Activated CD4-positive, alpha-beta T cell treated with anti-CD3 and anti-CD28 coated beads for 36 hours (primary cell): ENCODE measurements at regions of chr9 and their contacts with region 1.

Region 1: DNA sequence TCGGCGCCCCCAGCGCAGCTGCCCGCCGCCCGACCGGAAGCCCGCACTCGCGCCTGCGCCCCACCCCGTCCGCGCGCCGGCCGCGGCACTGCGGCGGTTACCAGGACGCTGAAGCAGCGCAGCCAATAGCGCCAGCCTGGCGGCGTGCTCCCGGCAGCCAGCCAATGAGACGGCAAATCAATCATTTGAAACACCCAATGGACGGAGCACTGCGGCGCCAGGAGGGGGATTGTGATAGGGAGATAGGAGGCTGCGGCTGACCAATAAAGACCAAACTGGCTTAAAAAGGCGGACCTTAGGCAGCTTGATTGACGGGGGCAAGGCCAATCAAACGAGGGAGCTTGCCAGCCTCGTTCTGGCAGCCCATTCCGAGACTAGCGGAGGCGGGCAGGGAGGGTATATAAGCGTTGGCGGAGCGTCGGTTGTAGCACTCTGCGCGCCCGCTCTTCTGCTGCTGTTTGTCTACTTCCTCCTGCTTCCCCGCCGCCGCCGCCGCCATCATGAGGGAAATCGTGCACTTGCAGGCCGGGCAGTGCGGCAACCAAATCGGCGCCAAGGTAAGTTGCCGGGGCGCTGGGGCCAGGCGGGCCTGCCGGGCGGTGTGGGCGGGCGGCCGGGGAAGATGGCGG is at the start of gene TUBB4B:
- DNase-seq: peak; percentile 98
- ATAC-seq: peak; percentile 84
- H3K4me3 Mint-ChIP-seq: peak within 1 kb of the TSS; percentile 83
- H3K27ac Mint-ChIP-seq: peak within 1 kb of the TSS; percentile 87
- H3K4me1 Mint-ChIP-seq: peaks cover 27% of the 10 kb centered on the region
- H3K27me3 Mint-ChIP-seq: no peaks in the 10 kb centered on the region
- total RNA-seq, gene TUBB4B: 264 to 278 TPM

Region 2: GRCh38 chr9:136991993-136992818 is 248.8 kb before region 1 on chr9 and contains the start of gene PAXX:
- CTCF ChIA-PET with region 1: no interaction called
- POLR2A ChIA-PET with region 1: no interaction called
- intact Hi-C with region 1: loop called in 1 of 2 experiments (anchors 1 kb)
- DNase-seq: peak; percentile 98
- ATAC-seq: peak; percentile 95
- H3K4me3 Mint-ChIP-seq: peak within 1 kb of the TSS; percentile 81
- H3K27ac Mint-ChIP-seq: peak within 1 kb of the TSS; percentile 70
- H3K4me1 Mint-ChIP-seq: peaks cover 22% of the 10 kb centered on the region
- H3K27me3 Mint-ChIP-seq: peaks cover 4% of the 10 kb centered on the region
- total RNA-seq, gene PAXX: 52.7 to 67.1 TPM

Region 3: DNA sequence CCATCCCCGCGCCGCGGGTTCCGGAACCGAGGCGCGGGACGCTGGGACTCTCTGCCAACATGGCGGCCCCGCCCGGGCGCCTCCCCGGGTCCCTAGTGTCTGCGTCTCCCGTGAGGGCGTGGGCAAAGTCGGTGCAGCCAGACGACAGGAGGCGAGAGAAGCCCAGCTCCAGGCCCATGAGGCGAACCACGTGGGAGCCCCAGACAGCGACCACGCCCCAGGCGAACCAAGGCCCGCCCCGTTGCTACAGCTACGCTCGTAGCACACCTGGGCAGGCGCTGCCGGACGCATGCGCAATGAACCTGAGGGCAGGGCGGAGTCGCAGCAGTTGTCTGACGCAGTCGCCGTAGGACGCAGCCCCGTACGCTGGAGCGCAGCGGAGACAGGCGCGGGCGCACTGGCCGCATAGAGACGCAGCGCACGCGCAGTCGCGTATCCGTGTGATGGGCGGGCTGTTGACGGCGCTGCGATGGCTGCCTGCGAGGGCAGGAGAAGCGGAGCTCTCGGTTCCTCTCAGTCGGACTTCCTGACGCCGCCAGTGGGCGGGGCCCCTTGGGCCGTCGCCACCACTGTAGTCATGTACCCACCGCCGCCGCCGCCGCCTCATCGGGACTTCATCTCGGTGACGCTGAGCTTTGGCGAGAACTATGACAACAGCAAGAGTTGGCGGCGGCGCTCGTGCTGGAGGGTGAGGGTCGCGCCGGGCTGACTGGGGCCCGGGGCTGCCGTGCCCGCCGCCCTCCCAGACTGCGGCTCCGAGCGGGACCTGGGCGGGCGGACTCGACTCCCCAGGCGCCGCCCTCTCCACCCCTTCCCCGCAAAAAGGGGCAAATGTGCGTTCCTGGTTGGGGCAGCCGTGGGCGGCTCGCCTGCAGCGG is 154.2 kb before region 1 on chr9 and contains the start of gene MAN1B1:
- CTCF ChIA-PET with region 1: interaction called, 5 read pairs
- POLR2A ChIA-PET with region 1: interaction called, 7 read pairs
- intact Hi-C with region 1: loop called in 1 of 2 experiments (anchors 1 kb)
- DNase-seq: peak; percentile 100
- ATAC-seq: peak; percentile 85
- H3K4me3 Mint-ChIP-seq: peak within 1 kb of the TSS; percentile 88
- H3K27ac Mint-ChIP-seq: peak within 1 kb of the TSS; percentile 96
- H3K4me1 Mint-ChIP-seq: peaks cover 46% of the 10 kb centered on the region
- H3K27me3 Mint-ChIP-seq: no peaks in the 10 kb centered on the region
- total RNA-seq, gene MAN1B1: 21.6 to 26.7 TPM

Region 4: DNA sequence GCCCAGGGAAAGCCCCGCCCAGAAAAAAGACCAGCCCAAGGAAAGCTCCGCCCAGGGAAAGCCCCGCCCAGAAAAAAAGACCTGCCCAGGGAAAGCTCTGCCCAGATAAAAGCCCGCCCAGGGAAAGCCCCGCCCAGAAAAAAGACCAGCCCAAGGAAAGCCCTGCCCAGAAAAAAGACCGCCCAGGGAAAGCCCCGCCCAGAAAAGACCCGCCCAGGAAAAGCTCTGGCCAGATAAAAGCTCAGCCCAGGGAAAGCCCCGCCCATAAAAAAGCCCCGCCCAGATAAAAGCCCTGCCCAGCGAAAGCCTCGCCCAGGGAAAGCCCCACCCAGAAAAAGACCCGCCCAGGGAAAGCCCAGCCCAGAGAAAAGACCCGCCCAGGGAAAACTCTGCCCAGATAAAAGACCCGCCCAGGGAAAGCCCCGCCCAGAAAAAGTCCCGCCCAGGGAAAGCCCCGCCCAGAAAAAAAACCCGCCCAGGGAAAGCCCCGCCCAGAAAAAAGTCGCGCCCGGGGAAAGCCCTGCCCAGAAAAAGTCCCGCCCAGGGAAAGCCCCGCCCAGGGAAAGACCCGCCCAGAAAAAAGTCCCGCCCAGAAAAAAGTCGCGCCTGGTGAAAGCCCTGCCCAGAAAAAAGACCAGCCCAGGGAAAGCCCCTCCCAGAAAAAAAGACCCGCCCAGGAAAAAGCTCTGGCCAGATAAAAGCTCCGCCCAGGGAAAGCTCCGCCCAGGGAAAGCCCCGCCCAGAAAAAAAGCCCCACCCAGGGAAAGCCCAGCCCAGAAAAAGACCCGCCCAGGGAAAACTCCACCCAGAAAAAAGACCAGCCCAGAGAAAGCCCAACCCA is 90.1 kb before region 1 on chr9:
- CTCF ChIA-PET with region 1: no interaction called
- POLR2A ChIA-PET with region 1: no interaction called
- intact Hi-C with region 1: loop called in 1 of 2 experiments (anchors 1 kb)
- DNase-seq: peak; percentile 90
- ATAC-seq: peak; percentile 80
- H3K4me3 Mint-ChIP-seq: no peak overlapping the region
- H3K27ac Mint-ChIP-seq: no peak overlapping the region
- H3K4me1 Mint-ChIP-seq: peaks cover 8% of the 10 kb centered on the region
- H3K27me3 Mint-ChIP-seq: peaks cover 8% of the 10 kb centered on the region

Region 5: GRCh38 chr9:137254624-137255447 is 13.9 kb after region 1 on chr9 and contains the start of gene NELFB:
- CTCF ChIA-PET with region 1: interaction called, 6 read pairs
- POLR2A ChIA-PET with region 1: interaction called, 31 read pairs
- intact Hi-C with region 1: loop called (anchors 1 kb)
- DNase-seq: peak; percentile 97
- ATAC-seq: peak; percentile 94
- H3K4me3 Mint-ChIP-seq: peak within 1 kb of the TSS; percentile 87
- H3K27ac Mint-ChIP-seq: peak within 1 kb of the TSS; percentile 81
- H3K4me1 Mint-ChIP-seq: peaks cover 18% of the 10 kb centered on the region
- H3K27me3 Mint-ChIP-seq: no peaks in the 10 kb centered on the region
- total RNA-seq, gene NELFB: 41.4 to 54.1 TPM